Dendritic cell treated with granulocyte-macrophage colony-stimulating factor and Interleukin-4, amounts not matched to agents 40 ng/mL and 50 ng/mL, for 4 days (primary cell): ENCODE measurements at regions of chr18 and their contacts with region 1.

Region 1: DNA sequence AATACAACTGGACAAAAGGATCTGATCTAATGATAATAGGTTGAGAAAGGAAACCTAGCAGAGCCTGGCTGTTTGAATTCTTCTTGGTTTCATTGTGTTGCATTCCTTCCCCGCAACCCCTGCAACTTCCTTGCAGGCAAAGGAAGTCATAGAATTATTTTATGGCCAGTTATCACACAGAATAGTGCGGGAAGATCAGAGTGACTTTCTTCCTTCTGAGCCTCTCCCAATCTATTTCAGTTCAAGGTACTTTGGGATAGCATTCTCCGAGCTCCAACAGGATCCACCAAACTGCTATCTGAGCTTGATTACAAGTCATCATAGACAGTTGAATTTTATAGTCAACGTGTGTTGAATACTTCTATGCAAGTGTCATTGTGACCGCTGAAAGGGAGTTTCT is 441.1 kb downstream of the DCC start:
- H3K4me3 Mint-ChIP-seq: no peak overlapping the region
- H3K27ac Mint-ChIP-seq: no peak overlapping the region
- H3K4me1 Mint-ChIP-seq: no peaks in the 10 kb centered on the region
- H3K27me3 Mint-ChIP-seq: no peaks in the 10 kb centered on the region

Region 2: GRCh38 chr18:52723550-52723970 is 57.6 kb before region 1 on chr18:
- intact Hi-C with region 1: loop called (anchors 10 kb)
- H3K4me3 Mint-ChIP-seq: no peak overlapping the region
- H3K27ac Mint-ChIP-seq: no peak overlapping the region
- H3K4me1 Mint-ChIP-seq: no peaks in the 10 kb centered on the region
- H3K27me3 Mint-ChIP-seq: no peaks in the 10 kb centered on the region